CD8-positive, alpha-beta T cell (primary cell): ENCODE measurements at regions of chr19 and their contacts with region 1.

Region 1: GRCh38 chr19:50724522-50725217 is 1.5 kb downstream of the CLEC11A start:
- DNase-seq: peak; percentile 84 to 97 (median 94)
- ATAC-seq: peak; percentile 88
- H3K4me3 ChIP-seq: peak overlapping the region; percentile 56 to 81
- H3K4me3 Mint-ChIP-seq: peak overlapping the region; percentile 82
- H3K27ac ChIP-seq: peak overlapping the region; percentile 79 to 89
- H3K27ac Mint-ChIP-seq: peak overlapping the region; percentile 85
- H3K4me1 ChIP-seq: peaks cover 48% of the 10 kb centered on the region
- H3K4me1 Mint-ChIP-seq: peaks cover 46% of the 10 kb centered on the region
- H3K27me3 ChIP-seq: peaks cover 0 to 16% of the 10 kb centered on the region in 2 experiments
- H3K27me3 Mint-ChIP-seq: peaks cover 34% of the 10 kb centered on the region
- CTCF ChIP-seq: peak; percentile 71

Region 2: GRCh38 chr19:50376166-50377050 is 348.3 kb before region 1 on chr19 and contains the start of gene NR1H2:
- CTCF ChIA-PET with region 1: no interaction called
- POLR2A ChIA-PET with region 1: interaction called, 3 read pairs
- intact Hi-C with region 1: loop called (anchors 1 to 10 kb)
- DNase-seq: peak; percentile 89 to 99 (median 95)
- ATAC-seq: peak; percentile 90
- H3K4me3 ChIP-seq: peak within 1 kb of the TSS; percentile 73 to 93
- H3K4me3 Mint-ChIP-seq: peak within 1 kb of the TSS; percentile 99
- H3K27ac ChIP-seq: peak within 1 kb of the TSS; percentile 99 to 100
- H3K27ac Mint-ChIP-seq: peak within 1 kb of the TSS; percentile 100
- H3K4me1 ChIP-seq: peaks cover 11% of the 10 kb centered on the region
- H3K4me1 Mint-ChIP-seq: peaks cover 22% of the 10 kb centered on the region
- H3K27me3 ChIP-seq: no peaks in the 10 kb centered on the region
- H3K27me3 Mint-ChIP-seq: no peaks in the 10 kb centered on the region
- CTCF ChIP-seq: no peak
- total RNA-seq, gene NR1H2: 320 to 327 TPM

Region 3: DNA sequence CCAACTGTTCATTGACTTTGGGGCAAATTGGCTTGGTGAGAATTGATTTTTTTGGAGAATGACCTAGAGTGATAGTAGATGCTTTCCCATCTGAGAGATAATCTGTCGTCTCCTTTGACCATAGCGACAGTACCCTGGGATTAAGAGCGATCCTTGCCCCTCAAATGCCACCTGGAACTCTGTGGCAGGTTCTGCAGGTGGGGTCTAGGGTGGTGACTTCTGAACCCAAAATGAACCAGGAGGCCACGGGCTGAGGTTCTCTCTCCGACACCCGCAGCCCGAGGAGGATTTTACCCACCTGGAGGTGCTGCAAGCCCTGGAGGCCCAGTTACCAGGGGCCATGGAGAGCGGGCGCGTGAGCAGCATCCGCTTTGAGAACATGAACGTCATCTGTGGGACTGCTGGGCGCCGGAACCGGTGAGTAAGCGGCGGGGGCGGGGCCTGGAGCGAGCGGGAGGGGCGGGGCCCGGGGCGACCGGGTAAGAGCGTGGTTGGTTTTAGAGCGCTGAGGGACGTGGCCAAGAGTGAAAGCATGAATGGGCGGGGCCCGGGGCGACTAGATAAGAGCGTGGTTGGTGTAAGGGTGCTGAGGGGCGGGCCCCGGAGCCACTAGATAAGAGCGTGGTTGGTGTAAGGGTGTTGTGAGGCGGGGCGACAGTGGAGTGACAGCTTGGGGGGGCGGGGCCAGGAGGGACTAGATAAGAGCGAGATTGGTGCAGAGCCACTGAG is 66.8 kb before region 1 on chr19:
- CTCF ChIA-PET with region 1: no interaction called
- POLR2A ChIA-PET with region 1: no interaction called
- intact Hi-C with region 1: loop called in 1 of 2 experiments (anchors 2 kb)
- DNase-seq: peak; percentile 54 to 90 (median 78)
- ATAC-seq: peak; percentile 92
- H3K4me3 ChIP-seq: peak overlapping the region; percentile 27 to 50
- H3K4me3 Mint-ChIP-seq: peak overlapping the region; percentile 72
- H3K27ac ChIP-seq: peak overlapping the region; percentile 36 to 37
- H3K27ac Mint-ChIP-seq: no peak overlapping the region
- H3K4me1 ChIP-seq: peaks cover 15% of the 10 kb centered on the region
- H3K4me1 Mint-ChIP-seq: peaks cover 18% of the 10 kb centered on the region
- H3K27me3 ChIP-seq: peaks cover 0 to 13% of the 10 kb centered on the region in 2 experiments
- H3K27me3 Mint-ChIP-seq: peaks cover 74% of the 10 kb centered on the region
- CTCF ChIP-seq: no peak

Region 4: DNA sequence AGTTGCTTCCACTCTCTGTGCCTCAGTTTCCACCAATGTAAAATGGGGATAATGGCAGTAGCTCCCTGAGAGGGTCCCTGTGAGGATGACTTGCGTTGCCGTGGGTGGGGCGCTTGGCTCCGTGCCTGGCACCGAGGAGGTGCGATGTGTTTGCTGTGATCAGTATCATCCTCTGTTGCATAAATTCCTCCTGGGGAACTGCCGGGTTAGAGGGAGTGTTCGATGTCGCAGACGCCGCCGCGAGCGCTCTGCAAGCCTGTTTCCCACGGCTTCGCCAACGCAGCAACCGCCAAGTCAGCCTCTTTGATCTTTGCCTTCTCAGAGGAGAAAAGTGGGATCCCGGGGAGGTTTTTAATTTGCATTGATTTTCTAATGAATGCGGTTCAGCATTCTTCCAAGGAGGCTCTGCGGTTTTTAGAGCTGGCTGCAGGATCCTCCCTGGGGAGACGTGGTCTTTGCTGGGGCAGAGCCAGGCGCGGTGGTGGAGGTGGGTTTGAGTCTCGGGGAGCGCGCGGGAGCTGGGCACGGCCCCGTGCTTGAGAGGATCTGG is 53.2 kb after region 1 on chr19:
- CTCF ChIA-PET with region 1: interaction called, 4 read pairs
- POLR2A ChIA-PET with region 1: no interaction called
- intact Hi-C with region 1: loop called (anchors 1 kb)
- DNase-seq: no peak
- ATAC-seq: no peak
- H3K4me3 ChIP-seq: no peak overlapping the region
- H3K4me3 Mint-ChIP-seq: no peak overlapping the region
- H3K27ac ChIP-seq: no peak overlapping the region
- H3K27ac Mint-ChIP-seq: no peak overlapping the region
- H3K4me1 ChIP-seq: peaks cover 4% of the 10 kb centered on the region
- H3K4me1 Mint-ChIP-seq: no peaks in the 10 kb centered on the region
- H3K27me3 ChIP-seq: peaks cover 7 to 15% of the 10 kb centered on the region in 2 experiments
- H3K27me3 Mint-ChIP-seq: peaks cover 58% of the 10 kb centered on the region
- CTCF ChIP-seq: no peak

Region 5: GRCh38 chr19:50817941-50818858 is 93.5 kb after region 1 on chr19:
- CTCF ChIA-PET with region 1: no interaction called
- POLR2A ChIA-PET with region 1: no interaction called
- intact Hi-C with region 1: no loop called
- DNase-seq: peak in 5 of 9 experiments; percentile 26 to 33 (median 29)
- ATAC-seq: peak; percentile 40
- H3K4me3 ChIP-seq: peak overlapping the region; percentile 19 to 37
- H3K4me3 Mint-ChIP-seq: peak overlapping the region; percentile 53
- H3K27ac ChIP-seq: no peak overlapping the region
- H3K27ac Mint-ChIP-seq: no peak overlapping the region
- H3K4me1 ChIP-seq: peaks cover 15% of the 10 kb centered on the region
- H3K4me1 Mint-ChIP-seq: peaks cover 19% of the 10 kb centered on the region
- H3K27me3 ChIP-seq: peaks cover 21 to 25% of the 10 kb centered on the region in 2 experiments
- H3K27me3 Mint-ChIP-seq: peaks cover 72% of the 10 kb centered on the region
- CTCF ChIP-seq: no peak

Region 6: DNA sequence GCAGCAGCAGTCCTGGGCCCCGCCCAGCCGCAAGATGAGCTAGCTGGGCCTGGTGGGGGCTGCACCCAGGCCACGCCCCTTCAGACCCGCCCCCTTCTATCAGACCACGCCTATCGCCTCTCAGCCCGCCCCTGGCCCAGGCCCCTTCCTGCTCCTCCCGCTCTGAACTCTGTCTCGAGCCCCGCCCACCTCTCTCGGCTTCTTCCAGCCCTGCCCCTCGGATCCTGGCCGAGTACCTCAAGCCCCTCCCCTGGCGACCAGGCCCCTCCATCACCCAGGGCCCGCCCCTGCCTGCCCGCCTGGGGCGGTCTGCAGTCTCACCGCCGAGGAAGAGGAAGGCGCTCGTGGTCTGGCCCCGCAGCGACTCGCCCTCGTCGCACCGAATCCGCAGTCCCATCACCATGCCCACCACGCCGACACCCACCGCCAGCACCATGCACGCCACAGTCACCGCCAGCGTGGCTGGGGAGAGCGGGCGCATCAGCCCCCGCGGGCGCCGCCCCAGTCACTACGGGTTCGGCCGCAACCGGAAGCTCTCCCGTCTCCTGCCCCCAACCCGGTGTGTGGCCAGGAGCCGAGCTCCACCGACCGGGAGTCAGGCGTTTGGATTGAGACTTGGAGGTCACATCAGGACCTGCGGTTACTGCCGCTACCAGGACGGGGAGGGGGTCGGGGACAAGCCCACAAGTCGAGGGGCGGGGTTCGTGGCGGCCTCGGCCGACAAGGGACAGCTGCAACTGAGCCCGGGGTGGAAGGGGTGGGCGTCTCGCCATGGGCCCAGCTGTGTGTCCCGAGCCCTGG is 643.1 kb after region 1 on chr19:
- CTCF ChIA-PET with region 1: no interaction called
- POLR2A ChIA-PET with region 1: no interaction called
- intact Hi-C with region 1: loop called in 1 of 2 experiments (anchors 10 kb)
- DNase-seq: peak; percentile 88 to 98 (median 95)
- ATAC-seq: peak; percentile 78
- H3K4me3 ChIP-seq: peak overlapping the region; percentile 74 to 77
- H3K4me3 Mint-ChIP-seq: peak overlapping the region; percentile 98
- H3K27ac ChIP-seq: peak overlapping the region; percentile 48 to 87
- H3K27ac Mint-ChIP-seq: peak overlapping the region; percentile 96
- H3K4me1 ChIP-seq: peaks cover 61% of the 10 kb centered on the region
- H3K4me1 Mint-ChIP-seq: peaks cover 72% of the 10 kb centered on the region
- H3K27me3 ChIP-seq: no peaks in the 10 kb centered on the region
- H3K27me3 Mint-ChIP-seq: no peaks in the 10 kb centered on the region
- CTCF ChIP-seq: no peak